Spleen (tissue), 13 donors: ENCODE measurements at regions of chr17 and their contacts with region 1.

Region 1: GRCh38 chr17:16363749-16364536 is 10.7 kb upstream of the CENPV start:
- DNase-seq: peak; percentile 82
- H3K4me3 ChIP-seq: no peak overlapping the region
- H3K27ac ChIP-seq: no peak overlapping the region
- H3K4me1 ChIP-seq: peaks cover 0 to 8% (median 5%) of the 10 kb centered on the region in 6 donors
- H3K27me3 ChIP-seq: no peaks in the 10 kb centered on the region
- CTCF ChIP-seq: peak; percentile 69 to 92 (median 87)
- POLR2A ChIP-seq: no peak

Region 2: DNA sequence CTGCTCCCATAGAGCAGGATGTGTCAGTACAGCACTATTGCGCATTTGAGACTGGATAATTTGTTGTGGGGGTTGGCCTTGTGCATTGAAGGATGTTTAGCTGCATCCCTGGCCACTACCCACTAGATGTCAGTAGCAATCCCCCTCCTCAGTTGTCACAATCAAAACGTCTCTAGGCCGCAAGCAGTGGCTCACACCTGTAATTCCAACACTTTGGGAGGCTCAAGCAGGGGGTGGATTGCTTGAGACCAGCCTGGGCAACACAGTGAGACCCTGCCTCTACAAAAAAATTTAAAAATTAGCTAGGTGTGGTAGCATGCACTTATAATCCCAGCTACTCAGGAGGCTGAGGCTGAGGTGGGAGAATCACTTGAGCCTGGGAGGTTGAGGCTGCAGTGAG is 59.1 kb before region 1 on chr17:
- intact Hi-C with region 1: no loop called
- DNase-seq: no peak
- H3K4me3 ChIP-seq: no peak overlapping the region
- H3K27ac ChIP-seq: no peak overlapping the region
- H3K4me1 ChIP-seq: peaks cover 0 to 5% (median 0%) of the 10 kb centered on the region in 6 donors
- H3K27me3 ChIP-seq: no peaks in the 10 kb centered on the region
- CTCF ChIP-seq: peak in 6 of 11 experiments; percentile 13 to 34 (median 30)
- POLR2A ChIP-seq: no peak

Region 3: DNA sequence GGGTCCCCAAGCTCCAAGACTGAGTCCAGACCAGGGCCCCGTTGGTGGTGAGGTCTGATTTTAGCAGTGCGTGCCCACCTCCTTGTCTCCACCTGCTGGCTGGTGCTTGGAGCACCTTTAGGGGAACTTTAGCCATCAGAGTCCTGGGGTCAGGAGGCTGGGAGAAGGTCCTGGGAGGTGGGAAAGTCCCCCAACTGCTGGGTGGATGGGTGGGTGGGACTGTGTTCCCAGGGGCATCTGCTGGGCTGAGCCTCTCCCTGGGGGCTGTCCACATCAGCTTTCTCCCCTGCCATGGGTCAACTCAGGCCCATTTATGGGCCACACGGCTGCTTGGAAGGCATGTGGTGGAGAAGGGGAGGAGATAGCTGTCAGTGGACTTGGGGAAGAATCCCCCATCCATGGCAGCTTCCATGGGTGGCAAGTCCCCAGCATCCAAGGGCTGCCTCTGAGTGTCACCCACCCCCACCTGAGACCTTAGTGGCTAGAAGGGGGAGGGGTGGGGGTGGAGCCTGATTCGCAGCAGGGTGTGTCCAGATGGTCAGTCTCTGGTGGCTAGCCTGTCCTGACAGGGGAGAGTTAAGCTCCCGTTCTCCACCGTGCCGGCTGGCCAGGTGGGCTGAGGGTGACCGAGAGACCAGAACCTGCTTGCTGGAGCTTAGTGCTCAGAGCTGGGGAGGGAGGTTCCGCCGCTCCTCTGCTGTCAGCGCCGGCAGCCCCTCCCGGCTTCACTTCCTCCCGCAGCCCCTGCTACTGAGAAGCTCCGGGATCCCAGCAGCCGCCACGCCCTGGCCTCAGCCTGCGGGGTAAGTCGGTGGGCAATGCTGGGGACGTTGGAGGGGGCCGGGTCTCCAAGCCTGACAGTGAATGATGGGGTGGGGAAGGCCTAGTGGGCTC is 51.3 kb after region 1 on chr17 and contains the start of gene TRPV2:
- intact Hi-C with region 1: loop called (anchors 10 kb)
- DNase-seq: peak; percentile 94
- H3K4me3 ChIP-seq: peak within 1 kb of the TSS; percentile 62 to 92 (median 75)
- H3K27ac ChIP-seq: peak within 1 kb of the TSS; percentile 91 to 96 (median 94)
- H3K4me1 ChIP-seq: peaks cover 24 to 58% (median 47%) of the 10 kb centered on the region in 6 donors
- H3K27me3 ChIP-seq: no peaks in the 10 kb centered on the region
- CTCF ChIP-seq: peak in 9 of 11 experiments; percentile 33 to 57 (median 51)
- POLR2A ChIP-seq: no peak
- total RNA-seq, gene TRPV2: 44.8 to 85.7 (median 50.2) TPM